Heart right ventricle (tissue), 16 donors: ENCODE measurements at regions of chr7 and their contacts with region 1.

Region 1: GRCh38 chr7:116588641-116589594 is 64.1 kb downstream of the CAV1 start:
- DNase-seq: no peak
- ATAC-seq: peak in 7 of 8 donors; percentile 39 to 74 (median 65)
- H3K4me3 ChIP-seq: no peak overlapping the region
- H3K27ac ChIP-seq: peak overlapping the region in 7 of 10 donors; percentile 42 to 71 (median 51)
- H3K4me1 ChIP-seq: peaks cover 0 to 43% (median 34%) of the 10 kb centered on the region in 9 donors
- H3K27me3 ChIP-seq: peaks cover 0 to 19% (median 0%) of the 10 kb centered on the region in 7 donors
- CTCF ChIP-seq: peak; percentile 47 to 87 (median 74)

Region 2: DNA sequence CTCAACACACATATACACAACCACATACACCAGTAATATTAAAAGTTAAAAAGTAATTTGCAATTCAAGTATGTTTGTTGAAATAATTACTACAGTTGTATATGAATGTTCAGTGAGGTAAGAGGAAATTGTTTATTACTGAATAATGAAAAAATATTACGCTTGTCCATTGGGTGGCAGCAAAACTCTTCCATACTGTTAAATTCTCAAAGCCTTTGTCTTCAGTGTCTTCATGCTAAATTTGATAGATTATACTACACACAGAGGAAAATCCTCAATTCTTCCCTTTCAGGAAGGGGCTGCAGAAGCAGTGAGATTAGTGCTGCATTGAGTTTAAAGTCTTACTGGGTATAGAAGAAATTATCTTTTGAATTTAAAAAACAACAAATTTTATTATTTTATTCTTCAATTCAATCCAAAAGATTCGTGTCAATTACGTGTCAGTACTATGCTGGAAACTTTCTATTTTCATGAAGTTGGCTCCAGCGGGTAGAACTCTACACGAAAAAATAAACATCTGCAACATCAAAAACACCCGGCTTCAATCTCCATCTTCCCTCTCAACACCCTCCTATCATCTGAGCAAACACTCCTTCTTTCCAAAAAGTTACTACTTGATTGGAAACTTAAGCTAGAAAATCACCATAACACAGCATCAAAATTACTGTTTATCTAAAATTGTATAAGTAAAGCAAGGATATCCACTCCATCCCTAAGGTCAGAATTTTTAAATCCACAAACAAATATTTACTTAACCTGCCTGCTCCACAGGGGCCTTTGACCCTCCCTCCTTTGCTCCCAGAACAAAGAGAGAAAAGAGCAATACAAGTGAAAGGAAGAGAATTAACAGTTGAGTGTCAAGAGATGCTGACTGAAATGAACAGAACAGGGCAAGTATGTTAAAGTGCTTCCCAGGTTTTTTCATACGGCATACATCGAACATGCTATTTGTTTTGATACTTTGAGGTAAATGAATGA is 415.6 kb before region 1 on chr7:
- intact Hi-C with region 1: loop called in 8 of 10 experiments (anchors 2 to 10 kb)
- DNase-seq: peak in 1 of 2 donors; percentile 28
- ATAC-seq: peak in 5 of 8 donors; percentile 42 to 50 (median 48)
- H3K4me3 ChIP-seq: no peak overlapping the region
- H3K27ac ChIP-seq: no peak overlapping the region
- H3K4me1 ChIP-seq: peaks cover 0 to 5% (median 0%) of the 10 kb centered on the region in 9 donors
- H3K27me3 ChIP-seq: no peaks in the 10 kb centered on the region
- CTCF ChIP-seq: peak; percentile 24 to 76 (median 63)

Region 3: DNA sequence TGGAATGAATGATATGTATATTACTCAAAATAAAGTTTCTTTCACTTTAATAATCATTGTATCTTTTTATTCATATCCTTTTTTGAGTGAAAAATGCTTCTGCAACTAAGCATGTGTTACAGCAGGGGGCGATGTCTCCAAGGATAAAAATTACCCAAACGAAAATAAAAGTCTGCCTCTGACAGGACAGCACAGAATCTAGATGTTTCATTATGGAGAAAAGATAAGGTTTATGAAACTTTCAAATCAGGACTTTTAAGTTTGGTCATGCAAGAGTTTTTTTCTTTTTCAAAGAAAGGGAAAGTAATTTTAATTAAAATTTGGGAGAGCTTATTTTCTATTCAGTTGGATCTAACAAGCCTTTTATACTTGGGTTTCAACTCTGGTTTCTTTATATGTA is 330.2 kb before region 1 on chr7:
- intact Hi-C with region 1: loop called (anchors 1 to 2 kb)
- DNase-seq: peak in 1 of 2 donors; percentile 26
- ATAC-seq: peak in 6 of 8 donors; percentile 67 to 79 (median 72)
- H3K4me3 ChIP-seq: no peak overlapping the region
- H3K27ac ChIP-seq: peak overlapping the region in 6 of 10 donors; percentile 0 to 42 (median 28)
- H3K4me1 ChIP-seq: peaks cover 0 to 15% (median 5%) of the 10 kb centered on the region in 9 donors
- H3K27me3 ChIP-seq: no peaks in the 10 kb centered on the region
- CTCF ChIP-seq: peak; percentile 59 to 89 (median 85)

Region 4: DNA sequence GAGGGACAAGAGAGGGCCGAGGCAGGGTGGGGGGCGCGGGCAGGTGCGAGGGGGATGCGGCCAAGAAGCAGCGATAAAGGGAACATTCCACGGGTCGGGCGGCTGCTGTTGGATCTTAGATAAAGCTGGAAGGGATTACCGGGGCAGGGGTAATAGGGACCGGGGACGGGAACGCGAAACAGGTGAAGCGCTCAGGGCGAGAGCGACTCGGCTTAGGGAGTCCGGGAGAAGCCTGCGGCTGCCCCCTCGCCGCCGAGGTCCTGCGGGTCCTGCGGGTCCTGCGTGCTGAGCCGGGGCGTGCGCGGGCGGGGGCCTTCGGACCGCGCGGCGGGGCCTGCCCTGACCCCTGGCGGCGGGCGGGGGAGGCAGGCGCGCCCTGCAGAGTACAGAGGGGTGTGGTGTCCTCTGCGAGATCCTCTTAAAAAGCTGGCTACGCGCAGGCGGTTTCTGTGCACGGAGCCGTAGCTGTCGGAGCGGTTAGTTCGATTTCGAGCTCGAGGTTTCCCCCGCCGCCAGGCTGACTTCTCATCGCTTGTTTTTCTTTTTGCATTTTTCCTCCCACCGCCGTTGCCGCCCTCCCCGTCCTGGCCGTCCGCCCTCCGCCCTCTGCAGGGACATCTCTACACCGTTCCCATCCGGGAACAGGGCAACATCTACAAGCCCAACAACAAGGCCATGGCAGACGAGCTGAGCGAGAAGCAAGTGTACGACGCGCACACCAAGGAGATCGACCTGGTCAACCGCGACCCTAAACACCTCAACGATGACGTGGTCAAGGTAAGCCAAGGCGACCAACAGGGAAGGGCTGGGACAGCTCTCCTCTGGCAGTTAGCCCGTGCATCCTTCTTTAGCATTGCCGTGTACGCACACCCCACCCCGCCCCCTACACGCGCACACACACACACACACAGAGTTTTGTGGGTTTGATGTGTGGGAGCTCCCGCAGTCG is 62.7 kb before region 1 on chr7:
- intact Hi-C with region 1: loop called in 8 of 10 experiments (anchors 2 to 10 kb)
- DNase-seq: peak; percentile 82 to 88
- ATAC-seq: peak; percentile 78 to 93 (median 87)
- H3K4me3 ChIP-seq: peak overlapping the region; percentile 61 to 96 (median 76)
- H3K27ac ChIP-seq: peak overlapping the region; percentile 90 to 99 (median 96)
- H3K4me1 ChIP-seq: peaks cover 2 to 81% (median 57%) of the 10 kb centered on the region in 9 donors
- H3K27me3 ChIP-seq: peaks cover 0 to 45% (median 0%) of the 10 kb centered on the region in 7 donors
- CTCF ChIP-seq: peak; percentile 79 to 95 (median 90)

Region 5: GRCh38 chr7:116548506-116548905 is 40.4 kb before region 1 on chr7:
- intact Hi-C with region 1: no loop called
- DNase-seq: no peak
- ATAC-seq: no peak
- H3K4me3 ChIP-seq: no peak overlapping the region
- H3K27ac ChIP-seq: peak overlapping the region in 6 of 10 donors; percentile 13 to 81 (median 34)
- H3K4me1 ChIP-seq: peaks cover 6 to 100% (median 83%) of the 10 kb centered on the region in 9 donors
- H3K27me3 ChIP-seq: no peaks in the 10 kb centered on the region
- CTCF ChIP-seq: no peak

Region 6: DNA sequence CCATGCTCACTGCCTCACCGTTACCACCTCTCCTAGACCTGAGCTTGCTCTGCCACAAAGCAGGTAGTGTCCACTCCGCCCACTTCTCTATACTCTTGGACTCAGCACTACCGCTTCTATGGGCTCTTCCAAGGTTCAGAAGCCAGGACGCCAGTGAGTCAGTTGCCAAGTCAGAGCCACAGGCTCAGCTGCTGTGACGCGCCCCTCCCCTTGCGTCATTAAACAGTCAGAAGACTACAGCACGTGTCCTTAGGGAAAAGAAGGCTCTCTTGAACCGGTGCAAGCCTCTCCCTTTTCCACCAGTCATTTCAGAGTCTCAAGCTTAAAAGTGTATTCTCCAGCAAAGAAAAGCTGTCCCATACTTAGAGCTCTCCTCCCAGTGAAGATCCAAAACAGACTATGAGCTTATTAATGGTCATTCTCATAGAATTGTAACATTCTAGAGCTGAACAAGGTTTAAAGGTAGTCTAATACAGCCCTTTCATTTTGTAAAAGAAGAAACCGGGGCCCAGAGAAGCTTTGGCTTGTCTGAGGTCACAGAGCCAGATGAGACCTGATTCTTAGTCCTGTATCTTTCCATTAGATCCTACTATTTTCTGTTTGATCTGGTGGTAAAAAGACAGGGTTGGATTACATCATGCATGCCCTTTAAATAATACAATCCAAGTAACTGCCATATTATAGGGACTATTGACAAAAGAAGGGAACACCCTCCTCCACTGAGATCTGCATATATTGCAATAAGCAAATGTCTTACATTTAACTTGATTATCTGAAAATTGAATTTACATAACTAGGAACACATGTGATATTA is 42.2 kb after region 1 on chr7:
- intact Hi-C with region 1: no loop called
- DNase-seq: peak; percentile 29 to 32
- ATAC-seq: peak; percentile 54 to 95 (median 72)
- H3K4me3 ChIP-seq: no peak overlapping the region
- H3K27ac ChIP-seq: peak overlapping the region in 2 of 10 donors; percentile 33 to 52
- H3K4me1 ChIP-seq: peaks cover 0 to 24% (median 7%) of the 10 kb centered on the region in 9 donors
- H3K27me3 ChIP-seq: no peaks in the 10 kb centered on the region
- CTCF ChIP-seq: no peak

Region 7: DNA sequence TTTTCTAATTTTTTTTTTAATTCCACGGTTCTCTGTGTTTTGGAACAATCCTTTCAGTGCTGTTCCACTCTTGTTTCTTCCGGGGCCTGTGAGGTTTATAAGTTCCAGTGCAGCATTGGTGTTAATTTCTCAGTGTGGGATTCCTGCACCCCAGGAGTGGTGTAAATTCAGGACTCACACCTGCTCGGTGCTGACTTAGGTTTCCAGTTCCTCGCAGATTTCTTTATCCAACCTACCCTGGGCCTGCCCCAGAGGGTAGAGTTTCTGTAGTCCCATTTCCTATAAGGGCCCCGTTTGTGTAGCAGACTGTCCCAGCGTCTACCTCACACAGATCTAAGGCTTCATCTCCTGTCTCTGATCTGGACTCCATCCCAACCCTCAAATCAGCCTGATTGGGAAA is 55.7 kb after region 1 on chr7:
- intact Hi-C with region 1: no loop called
- DNase-seq: no peak
- ATAC-seq: no peak
- H3K4me3 ChIP-seq: no peak overlapping the region
- H3K27ac ChIP-seq: no peak overlapping the region
- H3K4me1 ChIP-seq: peaks cover 0 to 11% (median 0%) of the 10 kb centered on the region in 9 donors
- H3K27me3 ChIP-seq: no peaks in the 10 kb centered on the region
- CTCF ChIP-seq: no peak

Region 8: DNA sequence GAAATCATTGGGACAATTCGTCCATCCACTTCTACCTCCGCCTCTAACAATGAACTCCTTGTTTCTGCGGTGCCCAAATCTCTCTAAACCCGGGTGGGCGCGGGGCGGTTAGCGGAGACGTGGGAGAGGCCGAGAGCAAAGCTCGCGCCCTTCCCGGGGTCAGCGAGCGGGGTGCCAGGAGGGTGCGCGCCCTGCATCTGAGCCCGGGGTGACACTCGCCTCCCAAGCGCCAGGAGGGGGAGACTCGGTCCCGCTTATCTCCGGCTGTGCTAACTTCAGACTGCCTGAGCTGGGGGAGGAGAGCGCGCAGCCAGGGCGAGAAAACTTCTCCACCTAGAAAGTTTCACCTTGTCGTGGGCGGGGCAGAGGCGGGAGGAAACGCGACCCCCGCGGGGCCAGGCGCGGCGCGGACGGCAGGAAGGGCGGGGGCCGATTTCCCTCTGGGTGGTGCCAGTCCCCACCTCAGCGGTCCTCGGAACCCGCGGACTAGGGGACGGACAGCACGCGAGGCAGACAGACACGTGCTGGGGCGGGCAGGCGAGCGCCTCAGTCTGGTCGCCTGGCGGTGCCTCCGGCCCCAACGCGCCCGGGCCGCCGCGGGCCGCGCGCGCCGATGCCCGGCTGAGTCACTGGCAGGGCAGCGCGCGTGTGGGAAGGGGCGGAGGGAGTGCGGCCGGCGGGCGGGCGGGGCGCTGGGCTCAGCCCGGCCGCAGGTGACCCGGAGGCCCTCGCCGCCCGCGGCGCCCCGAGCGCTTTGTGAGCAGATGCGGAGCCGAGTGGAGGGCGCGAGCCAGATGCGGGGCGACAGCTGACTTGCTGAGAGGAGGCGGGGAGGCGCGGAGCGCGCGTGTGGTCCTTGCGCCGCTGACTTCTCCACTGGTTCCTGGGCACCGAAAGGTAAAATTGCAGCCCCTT is 83.0 kb after region 1 on chr7 and contains the start of gene MET:
- intact Hi-C with region 1: loop called in 3 of 10 experiments (anchors 2 to 5 kb)
- DNase-seq: peak; percentile 68 to 77
- ATAC-seq: peak; percentile 86 to 95 (median 92)
- H3K4me3 ChIP-seq: peak within 1 kb of the TSS; percentile 41 to 69 (median 64)
- H3K27ac ChIP-seq: peak within 1 kb of the TSS; percentile 43 to 86 (median 78)
- H3K4me1 ChIP-seq: peaks cover 0 to 48% (median 14%) of the 10 kb centered on the region in 9 donors
- H3K27me3 ChIP-seq: peaks cover 0 to 60% (median 0%) of the 10 kb centered on the region in 7 donors
- CTCF ChIP-seq: peak; percentile 19 to 71 (median 54)
- total RNA-seq, gene MET: 11.0 to 23.3 (median 15.6) TPM